ENCODE measurements at regions of chr4 and their contacts with region 1.

Region 1: DNA sequence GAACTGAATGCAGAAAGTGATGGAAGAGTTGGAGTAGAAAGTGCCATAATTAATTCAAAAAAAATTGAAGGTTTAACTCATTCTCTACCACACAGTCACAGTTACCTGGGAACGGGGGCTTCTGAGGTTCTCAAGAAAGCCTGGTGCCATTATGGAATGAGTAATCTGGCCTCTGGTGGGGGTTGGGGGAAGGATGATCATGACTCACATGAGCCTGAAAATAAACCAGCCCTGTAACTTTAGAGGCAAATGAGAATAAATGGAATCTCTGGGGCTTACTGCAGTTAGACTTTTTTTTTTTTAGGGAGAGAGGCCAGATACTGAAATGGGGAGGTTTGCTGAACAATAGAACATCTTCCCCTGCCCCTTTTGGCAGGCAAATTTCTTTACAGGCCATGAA is 55.3 kb downstream of the SOD3 start:
- DNase-seq: peak; percentile 94
- ATAC-seq: peak; percentile 90
- H3K4me3 ChIP-seq: no peak overlapping the region
- H3K27ac ChIP-seq: peak overlapping the region; percentile 67; the same call in 1 of the 2 replicates
- H3K4me1 ChIP-seq: peaks cover 14% of the 10 kb centered on the region
- H3K27me3 ChIP-seq: no peaks in the 10 kb centered on the region
- CTCF ChIP-seq: no peak
- POLR2A ChIP-seq: no peak
- RAD21 ChIP-seq: 0 out of 2 replicates have a peak, but pooled peaks have one; percentile 15

Region 2: DNA sequence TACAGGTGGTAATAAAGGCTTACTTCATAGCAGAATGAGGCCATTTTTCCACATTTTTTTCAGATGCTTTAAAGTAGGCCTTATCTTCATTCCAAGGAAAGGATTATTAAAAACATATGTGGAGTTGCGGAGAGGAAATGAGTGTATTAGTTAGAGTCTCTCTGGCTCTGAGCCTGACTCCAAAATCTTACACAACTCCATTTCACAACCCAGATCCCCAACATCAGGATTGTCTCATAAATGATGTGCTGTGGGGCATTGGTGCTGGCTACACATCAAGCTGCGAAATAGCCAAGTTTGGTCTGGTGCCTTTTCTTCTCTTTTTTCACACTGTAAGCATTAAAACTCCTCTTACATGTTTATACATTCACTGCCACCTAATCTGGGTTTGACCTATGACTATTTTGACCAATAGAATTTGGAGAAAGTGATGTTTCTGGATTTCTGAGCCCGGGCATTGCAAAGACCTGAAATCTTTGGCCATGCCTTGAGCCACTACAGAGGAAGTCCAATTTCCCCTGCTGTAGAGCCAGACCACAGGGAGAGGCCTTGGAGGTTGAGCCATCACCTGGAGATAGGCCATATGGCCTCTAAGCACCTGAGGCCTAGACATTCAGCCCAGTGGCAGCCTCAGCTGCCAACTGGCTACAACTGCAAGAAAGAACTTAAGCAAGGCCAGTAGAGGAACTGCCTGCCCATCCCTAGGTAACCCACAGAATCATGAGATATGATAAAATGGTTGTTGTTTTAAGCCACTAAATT is 72.0 kb before region 1 on chr4:
- CTCF ChIA-PET with region 1: no interaction called
- POLR2A ChIA-PET with region 1: no interaction called
- dilution Hi-C with region 1: no loop called
- in situ Hi-C with region 1: no loop called
- intact Hi-C with region 1: loop called (anchors 5 kb)
- DNase-seq: peak; percentile 98
- ATAC-seq: peak; percentile 88
- H3K4me3 ChIP-seq: no peak overlapping the region
- H3K27ac ChIP-seq: peak overlapping the region; percentile 83
- H3K4me1 ChIP-seq: peaks cover 18% of the 10 kb centered on the region
- H3K27me3 ChIP-seq: no peaks in the 10 kb centered on the region
- CTCF ChIP-seq: no peak
- POLR2A ChIP-seq: no peak
- RAD21 ChIP-seq: no peak

Region 3: GRCh38 chr4:24800325-24800895 is 50.3 kb before region 1 on chr4:
- CTCF ChIA-PET with region 1: interaction called, 10 read pairs
- POLR2A ChIA-PET with region 1: no interaction called
- dilution Hi-C with region 1: no loop called
- in situ Hi-C with region 1: no loop called
- intact Hi-C with region 1: no loop called
- DNase-seq: no peak
- ATAC-seq: no peak
- H3K4me3 ChIP-seq: no peak overlapping the region
- H3K27ac ChIP-seq: no peak overlapping the region
- H3K4me1 ChIP-seq: peaks cover 7% of the 10 kb centered on the region
- H3K27me3 ChIP-seq: no peaks in the 10 kb centered on the region; the same call in 1 of the 2 replicates
- CTCF ChIP-seq: no peak
- POLR2A ChIP-seq: no peak
- RAD21 ChIP-seq: no peak

Region 4: GRCh38 chr4:24809815-24810405 is 40.8 kb before region 1 on chr4:
- CTCF ChIA-PET with region 1: no interaction called
- POLR2A ChIA-PET with region 1: no interaction called
- dilution Hi-C with region 1: no loop called
- in situ Hi-C with region 1: no loop called
- intact Hi-C with region 1: loop called (anchors 5 kb)
- DNase-seq: peak; percentile 83
- ATAC-seq: peak; percentile 89
- H3K4me3 ChIP-seq: no peak overlapping the region
- H3K27ac ChIP-seq: peak overlapping the region; percentile 14; the same call in 1 of the 2 replicates
- H3K4me1 ChIP-seq: peaks cover 10% of the 10 kb centered on the region
- H3K27me3 ChIP-seq: no peaks in the 10 kb centered on the region
- CTCF ChIP-seq: no peak
- POLR2A ChIP-seq: no peak
- RAD21 ChIP-seq: no peak

Measured in IMR-90 (cell line).